ENCODE measurements at regions of chr1 and their contacts with region 1.

Region 1: GRCh38 chr1:89843281-89844121 is 22.7 kb downstream of the LRRC8D start:
- DNase-seq: peak; percentile 64 to 65
- H3K4me3 ChIP-seq: peak overlapping the region; percentile 51 to 77 (median 66)
- H3K27ac ChIP-seq: peak overlapping the region in 2 of 3 donors; percentile 62 to 69
- H3K4me1 ChIP-seq: peaks cover 4 to 14% of the 10 kb centered on the region in 2 donors
- H3K27me3 ChIP-seq: no peaks in the 10 kb centered on the region
- CTCF ChIP-seq: peak in 5 of 6 experiments; percentile 8 to 84 (median 71)
- POLR2A ChIP-seq: peak in 1 of 2 donors; percentile 7

Region 2: DNA sequence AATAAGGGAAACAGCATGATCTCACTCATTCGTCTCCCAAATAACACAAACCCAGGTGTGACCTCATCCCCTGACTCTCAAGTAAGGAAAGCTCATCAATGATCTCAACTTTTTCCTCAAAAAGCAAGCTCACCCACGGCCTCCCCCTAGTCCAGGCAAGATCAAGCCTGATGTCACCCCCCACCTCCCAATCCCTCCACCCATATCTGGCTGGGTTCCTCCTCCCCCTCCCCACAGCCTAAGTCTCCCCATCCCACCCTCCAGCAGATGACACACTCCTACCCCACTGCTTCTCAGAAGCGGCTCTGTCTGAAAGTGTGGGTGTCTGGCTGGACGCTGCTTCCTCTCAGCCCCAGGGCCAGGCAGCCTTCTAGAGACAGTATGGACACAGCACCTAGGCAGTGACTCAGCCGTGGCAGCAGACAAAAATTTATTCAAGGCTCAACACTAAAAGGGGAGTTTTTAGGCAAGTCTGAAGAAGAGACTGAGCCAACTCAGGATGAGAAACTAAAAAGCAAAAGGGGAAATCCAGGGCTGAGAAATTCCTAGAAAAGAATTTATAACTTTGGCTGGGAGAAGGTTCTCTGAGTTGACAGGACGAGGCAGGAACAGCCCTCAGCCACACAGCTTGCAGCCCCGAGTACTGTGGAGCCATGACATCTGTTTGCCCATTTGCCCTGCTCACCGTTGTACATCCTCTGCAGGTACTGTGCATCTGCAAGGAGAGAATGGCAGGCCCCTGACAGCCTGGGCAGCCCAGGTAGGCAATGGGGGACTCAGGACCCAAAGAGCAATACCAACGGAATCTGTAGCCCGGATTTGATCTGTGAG is 104.3 kb before region 1 on chr1:
- intact Hi-C with region 1: no loop called
- DNase-seq: no peak
- H3K4me3 ChIP-seq: no peak overlapping the region
- H3K27ac ChIP-seq: no peak overlapping the region
- H3K4me1 ChIP-seq: peaks cover 0 to 8% of the 10 kb centered on the region in 2 donors
- H3K27me3 ChIP-seq: no peaks in the 10 kb centered on the region
- CTCF ChIP-seq: no peak
- POLR2A ChIP-seq: no peak

Region 3: GRCh38 chr1:89890085-89890752 is 46.7 kb after region 1 on chr1:
- intact Hi-C with region 1: loop called (anchors 10 kb)
- DNase-seq: no peak
- H3K4me3 ChIP-seq: no peak overlapping the region
- H3K27ac ChIP-seq: no peak overlapping the region
- H3K4me1 ChIP-seq: no peaks in the 10 kb centered on the region
- H3K27me3 ChIP-seq: no peaks in the 10 kb centered on the region
- CTCF ChIP-seq: no peak
- POLR2A ChIP-seq: no peak